Right ventricle myocardium inferior (tissue), 1 donor: ENCODE measurements at regions of chr2 and their contacts with region 1.

Region 1: GRCh38 chr2:54455563-54456361 is at the start of gene SPTBN1:
- DNase-seq: peak; percentile 94
- ATAC-seq: peak; percentile 96
- total RNA-seq, gene SPTBN1: 439 TPM

Region 2: DNA sequence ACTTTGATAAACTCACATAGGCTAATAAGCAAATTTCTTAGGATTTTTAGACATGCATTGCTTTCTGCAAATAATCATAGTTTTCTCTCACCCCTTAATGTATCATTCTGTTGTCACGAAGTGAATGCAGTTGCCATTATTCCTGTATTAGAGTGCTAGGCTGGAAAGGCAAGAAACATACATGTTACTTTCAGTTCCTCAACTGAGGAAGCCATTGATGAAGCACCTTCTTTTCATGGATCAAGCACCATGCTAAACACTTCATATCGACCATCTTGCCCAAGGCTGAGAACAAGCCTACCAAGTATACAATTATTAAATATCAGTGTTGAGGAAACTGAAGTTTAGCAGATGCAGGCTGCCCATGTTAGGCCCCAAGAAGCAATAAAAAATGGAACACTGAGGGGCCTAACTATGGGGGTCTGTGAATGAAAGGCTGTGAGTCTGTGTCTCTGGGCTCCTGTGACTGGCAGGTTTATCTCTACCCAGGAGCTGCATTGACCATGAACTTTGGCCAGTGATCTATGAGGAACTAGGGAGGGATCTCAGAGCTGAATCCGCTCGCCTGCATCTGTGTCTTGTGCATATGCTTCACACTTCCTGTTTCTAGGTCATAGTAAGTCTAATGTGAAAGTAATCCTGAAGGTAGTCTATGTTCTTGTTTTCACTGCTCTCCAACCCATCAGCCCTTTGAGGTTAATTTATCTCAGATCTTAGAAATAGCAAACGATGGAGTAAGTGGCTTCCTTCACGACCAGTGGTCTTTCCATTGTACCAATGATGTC is 183.7 kb before region 1 on chr2:
- intact Hi-C with region 1: no loop called
- DNase-seq: no peak
- ATAC-seq: no peak

Region 3: DNA sequence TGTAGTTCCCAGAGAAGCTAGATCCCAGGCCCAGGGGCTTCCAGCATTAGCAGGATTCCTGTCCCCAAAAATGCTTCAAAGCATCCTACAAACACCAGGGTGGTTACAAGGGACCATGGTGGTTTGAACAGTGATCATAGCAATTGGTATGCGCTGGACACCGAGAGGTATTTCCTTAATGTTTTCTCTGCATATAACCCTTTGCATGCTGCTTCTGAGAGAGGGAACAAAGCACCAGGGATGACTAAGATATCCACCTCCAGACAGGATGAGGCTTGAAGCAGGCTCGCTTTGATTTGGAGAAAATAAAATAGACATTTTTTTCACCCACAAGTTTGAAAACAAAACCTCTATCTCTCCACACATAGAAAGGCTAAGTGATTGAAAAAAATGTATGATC is 149.2 kb before region 1 on chr2:
- intact Hi-C with region 1: no loop called
- DNase-seq: no peak
- ATAC-seq: no peak

Region 4: DNA sequence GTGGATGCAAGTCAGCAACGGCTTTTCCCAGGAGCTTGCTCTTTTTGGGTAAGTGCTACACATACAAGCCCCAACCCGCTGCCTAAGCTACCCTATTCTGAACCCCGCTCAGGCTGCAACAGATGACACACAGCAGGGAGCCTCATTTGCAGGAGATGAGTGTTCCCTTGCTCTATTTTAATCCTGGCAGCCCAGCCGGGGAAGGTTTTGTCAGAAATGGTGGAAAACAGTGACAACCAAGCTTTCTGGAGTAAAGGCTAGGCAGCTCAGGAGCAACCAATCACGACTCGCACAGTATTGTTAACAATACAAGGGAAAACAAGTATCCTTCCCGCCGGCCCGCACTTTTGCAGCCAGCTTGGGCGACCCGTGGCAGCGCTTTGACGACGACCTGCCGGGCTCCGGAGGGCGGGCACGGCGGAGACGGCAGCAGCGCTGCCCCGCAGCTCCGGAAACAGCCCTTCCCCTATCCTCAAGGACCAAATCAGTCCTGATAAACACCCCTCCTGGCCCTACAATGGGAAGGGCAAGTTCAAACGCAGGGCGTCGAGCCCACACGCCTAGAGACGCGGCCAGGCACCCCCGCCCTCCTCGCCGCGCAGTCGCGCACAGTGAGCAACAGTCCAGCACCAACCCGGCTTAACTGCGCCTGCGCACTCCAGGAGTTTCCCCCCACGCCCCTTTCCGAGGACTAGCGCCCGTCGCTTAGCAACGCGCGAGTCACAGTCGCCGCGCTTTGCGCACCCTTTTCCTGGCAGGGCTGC is 125.4 kb before region 1 on chr2:
- intact Hi-C with region 1: loop called (anchors 5 kb)
- DNase-seq: peak; percentile 97
- ATAC-seq: peak; percentile 99

Region 5: GRCh38 chr2:54360055-54360792 is 95.5 kb before region 1 on chr2:
- intact Hi-C with region 1: loop called (anchors 2 kb)
- DNase-seq: peak; percentile 68
- ATAC-seq: peak; percentile 93

Region 6: DNA sequence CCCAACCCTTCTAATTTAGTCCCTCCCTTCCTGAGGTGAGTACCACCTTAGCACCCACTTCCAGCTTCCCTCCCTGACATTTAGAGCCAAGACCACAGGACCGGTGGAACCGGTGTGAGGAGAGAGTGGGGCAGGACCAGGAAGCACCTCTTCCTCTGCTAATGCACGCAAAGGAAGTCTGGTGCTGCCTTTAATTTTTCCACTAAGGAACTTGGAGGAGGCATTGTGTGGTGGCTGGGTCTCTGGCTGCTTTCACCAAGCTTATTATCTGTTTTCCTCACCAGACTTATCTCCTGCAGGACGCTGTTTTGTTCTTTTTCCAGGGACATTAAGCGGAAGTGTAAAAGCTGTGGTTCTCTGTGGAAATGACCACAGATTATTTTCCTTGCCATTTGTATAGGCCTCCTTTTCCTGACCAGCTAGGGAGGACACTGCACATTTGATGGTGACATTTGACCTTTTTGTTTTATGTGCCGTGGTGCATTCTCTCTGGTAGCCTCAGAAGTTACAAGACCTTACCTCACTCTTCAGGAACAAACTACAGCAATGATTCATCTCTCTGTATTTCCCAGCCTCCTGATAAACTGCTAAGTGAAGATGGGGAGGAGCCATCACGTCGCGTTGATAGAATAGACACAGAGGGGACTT is 39.5 kb before region 1 on chr2:
- intact Hi-C with region 1: loop called (anchors 5 kb)
- DNase-seq: no peak
- ATAC-seq: peak; percentile 57

Region 7: DNA sequence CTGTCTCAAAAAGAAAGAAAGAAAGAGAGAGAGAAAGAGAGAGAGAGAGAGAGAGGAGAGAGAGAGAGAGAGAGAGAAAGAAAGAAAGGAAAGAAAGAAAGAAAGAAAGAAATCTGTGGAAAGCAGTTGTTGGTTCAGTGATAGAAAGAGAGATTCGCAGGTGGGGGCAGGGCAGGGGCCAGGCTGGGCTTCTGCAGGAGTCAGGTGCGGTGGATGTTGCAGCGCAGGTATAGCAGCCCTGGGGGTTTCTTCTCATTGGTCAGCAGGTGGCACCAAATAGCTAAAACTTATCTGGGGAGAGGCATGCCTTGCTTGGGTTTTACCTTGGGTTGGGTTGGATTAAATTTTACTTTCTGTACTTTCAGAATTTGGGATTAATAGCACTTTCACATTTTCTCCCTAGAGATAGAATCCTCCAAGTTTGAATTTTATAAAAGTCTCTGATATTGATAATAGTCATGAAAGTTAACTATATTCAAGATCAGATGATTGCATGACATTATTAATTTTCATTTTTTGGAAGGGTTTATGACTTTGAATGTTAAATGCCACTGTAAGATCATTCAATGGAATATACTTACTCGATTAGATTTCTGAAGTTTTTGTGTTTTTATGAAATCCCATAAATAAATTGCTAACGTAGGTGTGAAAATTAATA is 67.0 kb after region 1 on chr2:
- intact Hi-C with region 1: loop called (anchors 5 kb)
- DNase-seq: peak; percentile 72
- ATAC-seq: peak; percentile 51

Region 8: GRCh38 chr2:54606393-54606969 is 150.7 kb after region 1 on chr2:
- intact Hi-C with region 1: loop called (anchors 5 kb)
- DNase-seq: no peak
- ATAC-seq: peak; percentile 70

Region 9: DNA sequence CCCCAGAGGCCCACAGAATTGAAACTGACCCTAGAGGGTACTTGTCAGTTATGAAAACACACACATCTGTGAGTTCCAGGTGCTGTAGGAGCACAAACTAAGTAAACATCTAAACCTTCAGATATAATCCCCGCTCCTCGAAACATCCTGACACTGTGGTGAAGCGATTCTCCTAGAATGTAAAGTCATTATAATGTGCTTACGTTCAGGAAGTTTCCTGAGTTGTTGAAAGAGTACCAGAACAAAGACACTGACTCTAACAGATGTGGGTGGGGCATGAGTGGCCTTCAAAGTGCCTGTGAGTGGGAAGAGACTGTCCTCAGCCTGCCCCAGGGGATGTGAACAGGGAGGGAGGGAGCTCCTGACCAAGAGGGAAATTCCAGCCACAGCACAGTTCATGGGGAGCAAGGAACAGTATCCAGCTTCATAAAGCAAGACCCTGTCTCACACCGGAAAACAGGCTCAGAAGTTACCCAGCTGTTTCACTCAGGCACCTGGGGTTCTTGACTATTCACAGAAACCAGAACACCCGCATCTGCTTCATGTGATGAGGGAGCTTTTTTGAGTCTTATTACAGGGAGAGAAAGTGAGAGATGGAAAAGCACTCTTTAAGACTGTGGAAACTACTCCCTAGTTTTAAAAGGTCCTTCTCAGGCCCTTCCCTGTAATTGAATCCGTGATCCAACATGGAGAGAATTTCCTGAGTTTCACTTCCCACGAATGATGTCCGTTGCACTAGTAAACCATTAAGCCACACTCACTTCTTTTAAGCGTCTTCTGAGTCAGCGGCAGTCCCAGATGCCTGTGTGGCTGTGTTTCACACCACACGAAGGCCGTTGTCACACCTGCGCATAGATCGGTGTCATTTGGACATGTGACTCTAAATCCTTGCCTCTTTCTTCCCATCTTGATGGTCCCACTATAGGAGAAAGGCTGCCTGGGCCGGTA is 179.1 kb after region 1 on chr2:
- intact Hi-C with region 1: loop called (anchors 5 kb)
- DNase-seq: peak; percentile 70
- ATAC-seq: peak; percentile 59